Calu3 (cell line): ENCODE measurements at regions of chr19 and their contacts with region 1.

Region 1: GRCh38 chr19:2151339-2152229 is at the start of gene AP3D1:
- DNase-seq: peak; percentile 98
- H3K4me3 Mint-ChIP-seq: peak within 1 kb of the TSS; percentile 75
- H3K27ac Mint-ChIP-seq: peak within 1 kb of the TSS; percentile 95
- H3K4me1 Mint-ChIP-seq: peaks cover 14% of the 10 kb centered on the region
- H3K27me3 Mint-ChIP-seq: no peaks in the 10 kb centered on the region
- CTCF ChIP-seq: no peak
- total RNA-seq, gene AP3D1: 107 and 108 TPM in 2 replicates

Region 2: GRCh38 chr19:2168619-2169424 is 17.2 kb after region 1 on chr19:
- CTCF ChIA-PET with region 1: interaction called, 11 read pairs
- intact Hi-C with region 1: no loop called
- DNase-seq: peak; percentile 94
- H3K4me3 Mint-ChIP-seq: peak overlapping the region; percentile 77
- H3K27ac Mint-ChIP-seq: peak overlapping the region; percentile 66
- H3K4me1 Mint-ChIP-seq: peaks cover 8% of the 10 kb centered on the region
- H3K27me3 Mint-ChIP-seq: no peaks in the 10 kb centered on the region
- CTCF ChIP-seq: no peak

Region 3: DNA sequence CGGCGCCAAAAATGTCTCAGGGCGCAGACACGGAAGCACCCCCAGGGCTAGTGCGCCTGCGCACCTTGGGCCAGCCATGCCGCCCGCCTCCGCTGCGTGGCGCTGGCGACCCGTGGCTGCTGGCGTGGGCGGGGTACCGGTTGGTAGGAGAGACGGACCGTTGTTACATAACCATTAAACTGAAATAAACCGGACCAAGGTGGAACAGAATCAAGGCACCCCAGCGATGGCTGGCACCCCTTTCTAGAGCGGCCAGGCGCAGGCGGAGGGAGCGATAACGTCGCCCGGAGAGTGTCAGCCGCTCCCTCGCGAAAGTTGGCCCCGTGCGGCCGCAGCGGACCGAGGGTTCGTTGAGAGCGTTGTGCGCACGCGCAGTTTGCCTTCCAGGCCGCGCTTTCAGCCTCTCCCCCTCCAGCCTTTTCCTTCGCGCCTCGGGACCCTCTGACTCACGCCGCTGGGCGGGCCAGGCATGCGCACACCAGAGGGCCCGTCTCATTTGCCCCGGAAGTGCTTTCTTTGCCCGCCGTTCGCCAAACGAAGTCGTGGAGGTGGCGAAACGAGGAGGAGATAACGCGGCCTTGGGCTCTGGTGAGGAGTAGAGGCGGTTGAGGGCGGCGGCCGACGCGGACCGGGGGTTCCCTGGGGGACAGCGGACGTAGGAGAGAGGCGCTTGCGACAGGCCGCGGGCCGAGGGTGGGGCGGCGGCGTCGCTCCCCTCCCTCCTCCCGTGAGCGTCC is 84.9 kb after region 1 on chr19 and contains the starts of genes PLEKHJ1 and SF3A2:
- CTCF ChIA-PET with region 1: interaction called, 6 read pairs
- intact Hi-C with region 1: loop called (anchors 10 kb)
- DNase-seq: peak; percentile 93
- H3K4me3 Mint-ChIP-seq: peak within 1 kb of the TSS; percentile 78
- H3K27ac Mint-ChIP-seq: peak within 1 kb of the TSS; percentile 90
- H3K4me1 Mint-ChIP-seq: peaks cover 33% of the 10 kb centered on the region
- H3K27me3 Mint-ChIP-seq: no peaks in the 10 kb centered on the region
- CTCF ChIP-seq: peak; percentile 87
- total RNA-seq, gene PLEKHJ1: 38.7 and 43.5 TPM in 2 replicates
- total RNA-seq, gene SF3A2: 83.0 and 83.6 TPM in 2 replicates

Region 4: GRCh38 chr19:2246801-2247361 is 95.3 kb after region 1 on chr19:
- CTCF ChIA-PET with region 1: no interaction called
- intact Hi-C with region 1: no loop called
- DNase-seq: peak; percentile 25
- H3K4me3 Mint-ChIP-seq: no peak overlapping the region
- H3K27ac Mint-ChIP-seq: no peak overlapping the region
- H3K4me1 Mint-ChIP-seq: no peaks in the 10 kb centered on the region
- H3K27me3 Mint-ChIP-seq: no peaks in the 10 kb centered on the region
- CTCF ChIP-seq: no peak

Region 5: GRCh38 chr19:2273356-2274184 is 122.0 kb after region 1 on chr19:
- CTCF ChIA-PET with region 1: interaction called, 5 read pairs
- intact Hi-C with region 1: loop called (anchors 5 kb)
- DNase-seq: peak; percentile 83
- H3K4me3 Mint-ChIP-seq: peak overlapping the region; percentile 95
- H3K27ac Mint-ChIP-seq: peak overlapping the region; percentile 94
- H3K4me1 Mint-ChIP-seq: peaks cover 17% of the 10 kb centered on the region
- H3K27me3 Mint-ChIP-seq: no peaks in the 10 kb centered on the region
- CTCF ChIP-seq: peak; percentile 76

Region 6: GRCh38 chr19:2391118-2391725 is 239.6 kb after region 1 on chr19:
- CTCF ChIA-PET with region 1: no interaction called
- intact Hi-C with region 1: loop called (anchors 5 kb)
- DNase-seq: peak; percentile 30
- H3K4me3 Mint-ChIP-seq: no peak overlapping the region
- H3K27ac Mint-ChIP-seq: no peak overlapping the region
- H3K4me1 Mint-ChIP-seq: peaks cover 8% of the 10 kb centered on the region
- H3K27me3 Mint-ChIP-seq: peaks cover 11% of the 10 kb centered on the region
- CTCF ChIP-seq: peak; percentile 46